ENCODE measurements at regions of chr3 and their contacts with region 1.

Region 1: GRCh38 chr3:99875929-99876841 is 58.5 kb downstream of the CMSS1 start:
- DNase-seq: peak; percentile 85 to 92 (median 89)
- H3K4me3 ChIP-seq: peak overlapping the region; percentile 57
- H3K27ac ChIP-seq: peak overlapping the region; percentile 80 to 93
- H3K4me1 ChIP-seq: peaks cover 4% of the 10 kb centered on the region
- H3K27me3 ChIP-seq: no peaks in the 10 kb centered on the region
- CTCF ChIP-seq: peak in 2 of 3 donors; percentile 21 to 27
- EP300 ChIP-seq: peak; percentile 10
- POLR2A ChIP-seq: peak; percentile 95

Region 2: DNA sequence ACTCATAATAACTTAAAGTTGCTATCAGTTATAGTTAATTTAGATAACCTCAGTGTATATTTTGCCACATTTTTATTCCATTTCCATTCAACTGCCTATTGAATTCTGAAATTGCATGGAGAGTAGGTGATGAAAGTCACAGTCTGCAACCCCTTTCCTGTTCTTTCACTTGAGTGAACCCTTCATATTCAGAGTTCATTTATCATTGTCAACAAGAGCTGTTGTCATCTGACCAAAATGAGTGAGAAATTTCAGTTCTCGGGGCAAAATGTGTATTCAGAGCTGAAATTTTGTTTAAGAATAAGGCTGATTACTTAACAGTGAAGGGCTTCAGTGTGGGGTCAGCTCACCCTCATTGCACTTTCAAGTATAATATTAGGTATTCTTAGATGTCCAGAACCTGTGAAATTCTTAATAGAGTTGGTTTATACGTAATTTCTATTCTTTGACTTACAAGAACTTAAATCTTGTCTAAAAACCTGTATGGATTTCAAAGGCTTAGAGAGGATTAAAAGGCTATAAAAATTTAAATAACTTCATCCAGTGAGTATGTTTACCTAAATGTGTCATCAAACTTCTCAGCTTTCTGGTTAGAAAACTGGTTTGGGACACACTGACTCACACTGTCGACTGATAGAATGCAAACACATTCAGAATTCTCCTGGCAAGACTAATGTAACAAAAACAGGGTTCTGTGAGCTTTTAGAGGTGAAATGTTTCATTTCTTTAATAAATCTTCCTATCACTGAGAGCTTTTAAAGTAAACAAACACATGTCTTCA is 33.7 kb after region 1 on chr3:
- intact Hi-C with region 1: no loop called
- DNase-seq: no peak
- H3K4me3 ChIP-seq: no peak overlapping the region
- H3K27ac ChIP-seq: no peak overlapping the region
- H3K4me1 ChIP-seq: no peaks in the 10 kb centered on the region
- H3K27me3 ChIP-seq: no peaks in the 10 kb centered on the region
- CTCF ChIP-seq: no peak
- EP300 ChIP-seq: no peak
- POLR2A ChIP-seq: no peak

Region 3: DNA sequence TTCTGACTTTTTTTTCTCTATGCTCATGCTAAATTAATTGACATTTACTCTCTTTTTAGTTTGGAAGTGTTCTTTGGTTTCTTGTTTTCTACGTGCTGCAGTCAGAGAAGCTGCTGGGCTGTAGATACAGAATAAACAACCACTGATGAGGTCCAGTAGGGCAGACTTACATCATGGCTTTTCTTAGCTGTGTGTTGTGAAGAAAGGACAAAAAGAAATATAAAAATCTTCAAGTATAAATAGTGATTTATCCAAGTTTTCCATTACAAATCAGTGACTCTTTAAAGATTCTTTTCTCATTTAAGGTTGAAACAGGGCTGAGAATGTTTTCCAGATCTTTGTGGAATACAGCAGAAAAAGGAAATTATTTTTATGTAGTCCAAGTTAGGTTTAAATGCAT is 63.7 kb after region 1 on chr3:
- intact Hi-C with region 1: loop called in 3 of 4 experiments (anchors 2 to 10 kb)
- DNase-seq: no peak
- H3K4me3 ChIP-seq: no peak overlapping the region
- H3K27ac ChIP-seq: peak overlapping the region in 1 of 2 donors; percentile 52
- H3K4me1 ChIP-seq: peaks cover 12% of the 10 kb centered on the region
- H3K27me3 ChIP-seq: no peaks in the 10 kb centered on the region
- CTCF ChIP-seq: no peak
- EP300 ChIP-seq: no peak
- POLR2A ChIP-seq: no peak

Region 4: DNA sequence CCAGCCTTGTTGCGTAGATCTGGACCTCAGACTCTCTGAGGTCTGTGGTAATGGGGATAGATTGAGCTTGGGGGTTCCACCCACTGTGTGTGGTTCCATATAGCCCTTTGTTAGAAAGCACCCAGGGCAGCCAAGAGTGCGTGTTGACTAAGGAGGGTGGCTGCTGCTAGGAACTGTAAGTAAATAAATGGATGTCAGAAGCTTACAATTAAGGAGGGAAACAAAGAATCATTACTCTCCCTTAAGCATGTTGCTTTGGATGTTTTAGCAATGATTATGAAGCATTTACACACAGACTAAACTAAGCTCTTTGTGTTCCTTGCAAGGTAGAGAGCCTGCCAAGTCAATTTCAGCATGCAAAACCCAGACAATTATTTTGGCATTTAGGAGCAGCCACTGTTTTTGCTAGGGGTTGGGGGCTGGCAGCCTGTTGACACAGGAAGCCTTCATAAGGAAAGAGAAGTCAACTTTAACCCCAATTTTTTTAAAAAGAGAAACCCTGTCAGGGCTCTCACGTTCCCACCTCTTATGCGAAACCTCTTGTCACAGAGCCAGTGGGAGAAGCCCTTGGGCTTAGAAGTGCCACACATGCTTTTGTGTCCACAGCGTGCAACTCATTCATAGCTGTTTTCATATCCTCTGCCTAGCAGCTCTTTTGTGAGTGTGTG is 69.3 kb after region 1 on chr3:
- intact Hi-C with region 1: loop called in 3 of 4 experiments (anchors 2 to 10 kb)
- DNase-seq: no peak
- H3K4me3 ChIP-seq: no peak overlapping the region
- H3K27ac ChIP-seq: peak overlapping the region in 1 of 2 donors; percentile 29
- H3K4me1 ChIP-seq: peaks cover 4% of the 10 kb centered on the region
- H3K27me3 ChIP-seq: no peaks in the 10 kb centered on the region
- CTCF ChIP-seq: no peak
- EP300 ChIP-seq: no peak
- POLR2A ChIP-seq: no peak

Region 5: DNA sequence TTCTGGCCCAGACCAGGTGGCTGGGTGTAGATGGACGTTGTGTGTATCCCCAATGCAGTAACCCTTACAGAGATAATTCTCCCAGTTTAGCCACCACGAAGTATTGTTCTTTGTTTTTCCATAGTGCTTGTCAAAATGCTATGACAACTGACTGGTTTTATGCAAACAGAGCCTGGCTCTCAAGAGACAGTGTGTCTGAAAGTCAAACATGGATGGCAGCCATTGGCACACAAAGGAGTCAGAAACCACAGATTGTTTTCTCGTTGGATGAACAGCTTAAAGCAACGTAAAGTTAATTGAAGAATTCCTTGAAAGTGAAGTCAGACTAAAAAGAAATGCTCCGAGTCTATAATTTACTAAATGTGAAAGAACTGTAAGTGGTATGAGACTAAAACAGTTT is 147.0 kb after region 1 on chr3:
- intact Hi-C with region 1: loop called in 2 of 4 experiments (anchors 10 kb)
- DNase-seq: no peak
- H3K4me3 ChIP-seq: no peak overlapping the region
- H3K27ac ChIP-seq: peak overlapping the region in 1 of 2 donors; percentile 77
- H3K4me1 ChIP-seq: peaks cover 9% of the 10 kb centered on the region
- H3K27me3 ChIP-seq: no peaks in the 10 kb centered on the region
- CTCF ChIP-seq: no peak
- EP300 ChIP-seq: no peak
- POLR2A ChIP-seq: no peak

Region 6: DNA sequence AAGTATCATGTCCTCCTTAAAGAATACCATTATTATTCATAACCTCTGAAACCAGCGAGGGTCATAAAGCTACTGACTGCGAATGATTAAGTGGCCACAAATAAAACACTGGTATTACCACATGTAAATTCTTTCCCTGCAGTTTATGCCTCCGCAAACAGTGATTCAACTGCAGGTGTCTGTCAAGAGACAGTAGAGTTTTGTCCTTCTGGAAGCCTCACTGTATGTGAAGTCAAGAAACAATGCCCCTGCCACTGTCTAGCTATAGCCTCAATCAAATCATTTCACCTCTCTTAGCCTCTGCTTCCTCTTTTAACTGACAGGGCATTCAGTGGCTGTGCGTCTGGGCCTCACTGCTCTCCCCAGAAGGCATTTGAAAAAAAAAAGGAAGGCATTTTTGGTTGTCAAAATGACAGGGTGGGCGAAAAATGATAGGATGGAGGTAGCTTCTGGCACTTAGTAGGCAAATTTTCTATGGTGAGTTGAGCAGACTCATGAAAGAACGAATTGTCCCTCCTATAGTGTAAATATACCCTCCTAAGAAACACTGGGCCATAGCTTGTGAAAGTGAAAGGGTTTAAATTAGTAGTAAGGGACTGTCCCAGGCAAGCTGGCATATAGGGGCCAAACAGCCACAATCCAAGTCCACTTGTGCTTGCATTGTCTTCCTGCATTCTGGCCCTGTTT is 171.4 kb after region 1 on chr3:
- intact Hi-C with region 1: loop called in 2 of 4 experiments (anchors 10 kb)
- DNase-seq: no peak
- H3K4me3 ChIP-seq: no peak overlapping the region
- H3K27ac ChIP-seq: no peak overlapping the region
- H3K4me1 ChIP-seq: peaks cover 4% of the 10 kb centered on the region
- H3K27me3 ChIP-seq: no peaks in the 10 kb centered on the region
- CTCF ChIP-seq: no peak
- EP300 ChIP-seq: no peak
- POLR2A ChIP-seq: no peak

Region 7: DNA sequence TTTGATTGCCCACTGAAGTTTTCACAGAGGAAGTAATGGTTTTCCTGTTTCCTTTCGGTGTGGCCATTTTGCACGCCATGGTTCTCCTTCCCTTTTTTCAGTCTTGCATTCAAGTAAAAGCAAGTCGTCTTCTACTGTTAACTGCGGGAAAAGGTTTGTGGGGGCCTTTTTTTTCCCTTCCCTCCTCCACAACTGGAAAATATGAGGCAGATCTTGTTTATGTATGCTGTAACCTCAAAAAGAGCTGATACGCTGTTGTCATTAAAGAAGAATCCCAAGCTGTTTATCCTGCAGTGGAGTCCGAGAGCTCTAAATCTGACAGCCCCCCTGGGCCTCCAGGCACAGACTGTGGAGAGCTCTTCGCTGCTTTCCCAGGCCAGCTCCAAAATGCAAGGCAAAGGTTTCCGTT is 197.7 kb after region 1 on chr3:
- intact Hi-C with region 1: loop called in 1 of 4 experiments (anchors 10 kb)
- DNase-seq: peak; percentile 57 to 63 (median 61)
- H3K4me3 ChIP-seq: no peak overlapping the region
- H3K27ac ChIP-seq: peak overlapping the region; percentile 31 to 63
- H3K4me1 ChIP-seq: peaks cover 13% of the 10 kb centered on the region
- H3K27me3 ChIP-seq: no peaks in the 10 kb centered on the region
- CTCF ChIP-seq: no peak
- EP300 ChIP-seq: no peak
- POLR2A ChIP-seq: peak; percentile 16

Region 8: GRCh38 chr3:100175637-100176280 is 299.6 kb after region 1 on chr3:
- intact Hi-C with region 1: no loop called
- DNase-seq: no peak
- H3K4me3 ChIP-seq: no peak overlapping the region
- H3K27ac ChIP-seq: no peak overlapping the region
- H3K4me1 ChIP-seq: no peaks in the 10 kb centered on the region
- H3K27me3 ChIP-seq: no peaks in the 10 kb centered on the region
- CTCF ChIP-seq: no peak
- EP300 ChIP-seq: no peak
- POLR2A ChIP-seq: no peak

Region 9: GRCh38 chr3:100254168-100254777 is 378.1 kb after region 1 on chr3:
- intact Hi-C with region 1: loop called in 1 of 4 experiments (anchors 10 kb)
- DNase-seq: peak; percentile 53 to 72 (median 60)
- H3K4me3 ChIP-seq: no peak overlapping the region
- H3K27ac ChIP-seq: peak overlapping the region in 1 of 2 donors; percentile 13
- H3K4me1 ChIP-seq: peaks cover 7% of the 10 kb centered on the region
- H3K27me3 ChIP-seq: no peaks in the 10 kb centered on the region
- CTCF ChIP-seq: peak; percentile 63 to 75 (median 66)
- EP300 ChIP-seq: no peak
- POLR2A ChIP-seq: no peak

Measured in ovary (tissue), 10 donors.